ENCODE measurements at regions of chr9 and their contacts with region 1.

Region 1: GRCh38 chr9:19925817-19926503 is 137.1 kb upstream of the SLC24A2 start:
- DNase-seq: peak; percentile 90
- H3K4me3 Mint-ChIP-seq: peak overlapping the region; percentile 57
- H3K27ac Mint-ChIP-seq: no peak overlapping the region
- H3K4me1 Mint-ChIP-seq: peaks cover 18% of the 10 kb centered on the region
- H3K27me3 Mint-ChIP-seq: peaks cover 2% of the 10 kb centered on the region

Region 2: GRCh38 chr9:19471737-19472648 is 454.0 kb before region 1 on chr9:
- CTCF ChIA-PET with region 1: no interaction called
- intact Hi-C with region 1: loop called (anchors 2 kb)
- DNase-seq: peak; percentile 77
- H3K4me3 Mint-ChIP-seq: peak overlapping the region; percentile 9
- H3K27ac Mint-ChIP-seq: no peak overlapping the region
- H3K4me1 Mint-ChIP-seq: peaks cover 14% of the 10 kb centered on the region
- H3K27me3 Mint-ChIP-seq: peaks cover 3% of the 10 kb centered on the region

Region 3: DNA sequence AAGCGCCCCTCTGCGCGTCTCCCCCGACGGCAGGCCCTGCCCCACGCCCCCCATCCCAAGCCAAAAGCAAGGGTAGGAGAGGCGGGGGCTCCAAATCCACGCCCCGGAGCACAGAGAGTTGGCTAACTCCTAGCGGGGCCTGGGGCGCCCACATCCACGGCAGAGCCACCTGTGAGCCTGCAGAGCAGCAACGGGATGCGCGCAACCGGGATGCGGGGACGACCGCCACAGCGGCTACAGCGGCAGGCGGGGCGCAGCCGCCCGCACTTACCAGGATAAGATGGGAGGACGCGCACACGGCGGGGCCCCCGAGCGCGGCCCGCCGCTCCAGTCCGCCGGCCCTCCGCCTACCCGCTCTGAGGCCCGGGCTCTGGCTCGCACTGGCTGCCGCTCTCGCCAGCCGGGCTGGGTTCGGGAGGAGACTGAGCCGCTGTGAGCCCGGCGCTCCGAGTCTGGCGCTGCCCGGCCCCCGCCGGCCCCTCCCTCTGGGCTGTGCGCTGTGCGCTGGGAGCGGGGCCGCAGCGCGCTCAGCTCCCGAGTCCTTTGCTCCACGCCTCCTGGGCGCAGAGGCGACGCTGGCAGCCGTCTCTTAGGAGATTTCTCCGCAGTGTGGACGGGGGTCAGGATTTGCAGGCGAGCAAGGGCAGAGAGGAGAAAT is 137.2 kb before region 1 on chr9 and contains the start of gene SLC24A2:
- CTCF ChIA-PET with region 1: no interaction called
- intact Hi-C with region 1: no loop called
- DNase-seq: no peak
- H3K4me3 Mint-ChIP-seq: no peak within 1 kb of the TSS
- H3K27ac Mint-ChIP-seq: no peak within 1 kb of the TSS
- H3K4me1 Mint-ChIP-seq: no peaks in the 10 kb centered on the region
- H3K27me3 Mint-ChIP-seq: peaks cover 44% of the 10 kb centered on the region
- total RNA-seq, gene SLC24A2: not detected

Region 4: GRCh38 chr9:19879062-19879461 is 46.9 kb before region 1 on chr9:
- CTCF ChIA-PET with region 1: no interaction called
- intact Hi-C with region 1: no loop called
- DNase-seq: no peak
- H3K4me3 Mint-ChIP-seq: no peak overlapping the region
- H3K27ac Mint-ChIP-seq: no peak overlapping the region
- H3K4me1 Mint-ChIP-seq: no peaks in the 10 kb centered on the region
- H3K27me3 Mint-ChIP-seq: peaks cover 16% of the 10 kb centered on the region

Region 5: DNA sequence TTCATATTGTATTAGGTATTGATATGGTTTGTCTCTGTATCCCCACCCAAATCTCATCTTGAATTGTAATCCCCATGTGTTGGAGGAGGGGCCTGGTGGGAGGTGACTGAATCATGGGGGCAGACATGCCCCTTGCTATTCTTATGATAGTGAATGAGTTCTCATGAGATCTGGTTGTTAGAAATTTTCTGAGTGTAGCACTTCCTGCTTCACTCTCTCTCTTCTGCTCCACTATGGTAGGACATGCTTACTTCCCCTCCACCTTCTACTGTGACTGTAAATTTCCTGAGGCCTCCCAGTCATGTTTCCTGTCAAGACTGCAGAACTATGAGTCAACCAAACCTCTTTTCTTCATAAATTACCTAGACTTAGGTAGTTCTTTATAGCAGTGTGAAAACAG is 50.3 kb after region 1 on chr9:
- CTCF ChIA-PET with region 1: no interaction called
- intact Hi-C with region 1: loop called (anchors 2 kb)
- DNase-seq: peak; percentile 69
- H3K4me3 Mint-ChIP-seq: no peak overlapping the region
- H3K27ac Mint-ChIP-seq: peak overlapping the region; percentile 83
- H3K4me1 Mint-ChIP-seq: peaks cover 28% of the 10 kb centered on the region
- H3K27me3 Mint-ChIP-seq: no peaks in the 10 kb centered on the region

Region 6: DNA sequence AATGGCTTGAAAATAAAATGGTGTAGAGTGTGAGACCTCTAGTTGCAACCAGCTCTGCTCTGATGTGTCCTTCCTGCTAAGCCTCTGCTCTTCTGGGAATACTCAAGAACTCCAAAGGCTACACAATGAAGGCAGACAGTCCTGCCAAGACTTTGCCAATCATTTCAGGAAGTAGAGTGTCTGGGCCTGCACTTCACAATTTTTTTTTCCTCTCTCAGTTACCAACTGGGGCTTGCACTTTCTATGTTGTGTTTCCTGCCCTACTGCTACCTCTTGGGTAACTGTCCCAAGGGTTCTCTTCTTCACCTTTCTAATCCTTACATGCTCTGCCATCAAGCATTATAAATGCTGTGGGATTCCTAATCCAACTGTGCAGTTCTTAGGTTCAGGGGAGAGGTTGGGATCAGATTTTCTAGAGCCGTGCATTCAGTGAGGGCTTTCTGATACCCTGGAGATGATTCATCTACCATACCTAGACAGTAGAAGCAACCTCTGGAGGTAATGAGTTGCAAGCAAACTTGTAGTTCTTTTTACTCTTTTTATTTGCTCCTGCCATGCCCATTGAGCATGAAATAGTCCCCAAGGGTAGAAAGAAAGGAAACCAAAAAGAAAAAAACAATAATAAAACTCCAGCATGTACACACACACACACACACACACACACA is 330.5 kb after region 1 on chr9:
- CTCF ChIA-PET with region 1: no interaction called
- intact Hi-C with region 1: loop called (anchors 5 kb)
- DNase-seq: no peak
- H3K4me3 Mint-ChIP-seq: no peak overlapping the region
- H3K27ac Mint-ChIP-seq: no peak overlapping the region
- H3K4me1 Mint-ChIP-seq: peaks cover 38% of the 10 kb centered on the region
- H3K27me3 Mint-ChIP-seq: no peaks in the 10 kb centered on the region

Region 7: GRCh38 chr9:20407012-20407411 is 481.1 kb after region 1 on chr9:
- CTCF ChIA-PET with region 1: no interaction called
- intact Hi-C with region 1: loop called (anchors 5 kb)
- DNase-seq: no peak
- H3K4me3 Mint-ChIP-seq: no peak overlapping the region
- H3K27ac Mint-ChIP-seq: no peak overlapping the region
- H3K4me1 Mint-ChIP-seq: peaks cover 51% of the 10 kb centered on the region
- H3K27me3 Mint-ChIP-seq: no peaks in the 10 kb centered on the region

Region 8: DNA sequence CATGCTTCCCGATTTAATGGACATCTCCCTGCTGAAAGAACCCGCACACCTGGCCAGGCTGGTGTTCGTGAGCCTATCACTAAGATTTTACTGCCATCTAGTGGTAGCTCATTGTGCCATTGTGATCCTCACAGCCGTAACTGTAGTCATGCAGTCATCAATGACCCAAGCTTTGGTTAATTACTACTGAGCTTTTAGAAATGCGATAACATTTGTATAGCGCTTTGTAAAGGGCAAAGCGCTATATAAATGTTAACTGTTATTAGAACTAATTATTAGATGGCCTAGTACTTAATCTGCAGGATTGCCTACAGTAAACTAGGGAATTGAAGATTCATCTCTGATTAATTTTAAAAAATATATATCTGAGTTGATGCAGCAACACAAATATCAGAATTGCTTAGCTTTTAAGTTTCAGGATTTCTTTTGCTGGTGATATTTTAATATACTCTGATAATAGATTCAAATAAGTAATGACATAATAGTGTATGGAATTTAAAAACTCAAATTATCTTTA is 1015.3 kb after region 1 on chr9:
- CTCF ChIA-PET with region 1: interaction called, 7 read pairs
- intact Hi-C with region 1: loop called (anchors 1 kb)
- DNase-seq: peak; percentile 63
- H3K4me3 Mint-ChIP-seq: no peak overlapping the region
- H3K27ac Mint-ChIP-seq: no peak overlapping the region
- H3K4me1 Mint-ChIP-seq: peaks cover 3% of the 10 kb centered on the region
- H3K27me3 Mint-ChIP-seq: no peaks in the 10 kb centered on the region

Region 9: GRCh38 chr9:21110708-21111576 is 1185.0 kb after region 1 on chr9:
- CTCF ChIA-PET with region 1: interaction called, 3 read pairs
- intact Hi-C with region 1: loop called (anchors 1 kb)
- DNase-seq: peak; percentile 20
- H3K4me3 Mint-ChIP-seq: no peak overlapping the region
- H3K27ac Mint-ChIP-seq: no peak overlapping the region
- H3K4me1 Mint-ChIP-seq: no peaks in the 10 kb centered on the region
- H3K27me3 Mint-ChIP-seq: no peaks in the 10 kb centered on the region

Measured in activated naive CD4-positive, alpha-beta T cell treated with anti-CD3 and anti-CD28 coated beads for 36 hours (primary cell).